ENCODE measurements at regions of chr14 and their contacts with region 1.

Region 1: GRCh38 chr14:64198486-64198885 is 95.7 kb downstream of the ESR2 start:
- DNase-seq: no peak
- H3K4me3 ChIP-seq: no peak overlapping the region
- H3K27ac ChIP-seq: no peak overlapping the region
- H3K4me1 ChIP-seq: peaks cover 0 to 8% (median 0%) of the 10 kb centered on the region in 4 donors
- H3K27me3 ChIP-seq: no peaks in the 10 kb centered on the region
- CTCF ChIP-seq: no peak
- EP300 ChIP-seq: no peak
- POLR2A ChIP-seq: no peak

Region 2: DNA sequence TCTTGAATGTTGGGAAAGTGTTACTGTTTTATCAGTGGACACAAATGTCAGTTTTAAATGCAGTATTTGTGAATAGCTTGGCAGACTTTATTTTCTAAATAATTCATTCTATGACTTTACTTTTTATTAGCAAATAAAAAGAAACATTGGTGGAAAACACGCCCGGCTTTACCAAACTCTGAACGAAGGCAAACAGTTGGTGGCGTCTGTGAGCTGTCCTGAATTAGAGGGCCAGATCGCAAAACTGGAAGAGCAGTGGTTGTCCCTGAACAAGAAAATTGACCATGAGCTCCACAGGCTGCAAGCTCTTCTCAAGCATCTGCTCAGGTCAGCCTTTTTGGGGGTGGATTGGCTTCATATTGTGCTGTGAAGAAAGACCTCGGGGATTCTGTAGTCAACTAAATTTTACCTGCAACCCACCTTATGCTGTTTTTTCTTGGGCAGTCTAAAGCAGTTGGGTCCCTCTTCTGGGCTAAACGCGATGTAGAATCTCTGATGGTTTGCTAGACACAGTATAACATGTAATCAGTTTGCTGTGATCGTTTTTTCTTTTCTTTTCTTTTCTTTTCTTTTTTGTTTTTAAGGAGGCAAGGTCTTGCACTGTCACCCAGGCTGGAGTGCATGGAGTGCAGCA is 60.7 kb before region 1 on chr14:
- in situ Hi-C with region 1: no loop called
- intact Hi-C with region 1: no loop called
- DNase-seq: no peak
- H3K4me3 ChIP-seq: no peak overlapping the region
- H3K27ac ChIP-seq: no peak overlapping the region
- H3K4me1 ChIP-seq: no peaks in the 10 kb centered on the region
- H3K27me3 ChIP-seq: no peaks in the 10 kb centered on the region
- CTCF ChIP-seq: no peak
- EP300 ChIP-seq: no peak
- POLR2A ChIP-seq: no peak

Region 3: GRCh38 chr14:64170181-64170580 is 28.3 kb before region 1 on chr14:
- in situ Hi-C with region 1: no loop called
- intact Hi-C with region 1: no loop called
- DNase-seq: peak; percentile 25
- H3K4me3 ChIP-seq: no peak overlapping the region
- H3K27ac ChIP-seq: no peak overlapping the region
- H3K4me1 ChIP-seq: no peaks in the 10 kb centered on the region
- H3K27me3 ChIP-seq: no peaks in the 10 kb centered on the region
- CTCF ChIP-seq: no peak
- EP300 ChIP-seq: no peak
- POLR2A ChIP-seq: no peak

Region 4: DNA sequence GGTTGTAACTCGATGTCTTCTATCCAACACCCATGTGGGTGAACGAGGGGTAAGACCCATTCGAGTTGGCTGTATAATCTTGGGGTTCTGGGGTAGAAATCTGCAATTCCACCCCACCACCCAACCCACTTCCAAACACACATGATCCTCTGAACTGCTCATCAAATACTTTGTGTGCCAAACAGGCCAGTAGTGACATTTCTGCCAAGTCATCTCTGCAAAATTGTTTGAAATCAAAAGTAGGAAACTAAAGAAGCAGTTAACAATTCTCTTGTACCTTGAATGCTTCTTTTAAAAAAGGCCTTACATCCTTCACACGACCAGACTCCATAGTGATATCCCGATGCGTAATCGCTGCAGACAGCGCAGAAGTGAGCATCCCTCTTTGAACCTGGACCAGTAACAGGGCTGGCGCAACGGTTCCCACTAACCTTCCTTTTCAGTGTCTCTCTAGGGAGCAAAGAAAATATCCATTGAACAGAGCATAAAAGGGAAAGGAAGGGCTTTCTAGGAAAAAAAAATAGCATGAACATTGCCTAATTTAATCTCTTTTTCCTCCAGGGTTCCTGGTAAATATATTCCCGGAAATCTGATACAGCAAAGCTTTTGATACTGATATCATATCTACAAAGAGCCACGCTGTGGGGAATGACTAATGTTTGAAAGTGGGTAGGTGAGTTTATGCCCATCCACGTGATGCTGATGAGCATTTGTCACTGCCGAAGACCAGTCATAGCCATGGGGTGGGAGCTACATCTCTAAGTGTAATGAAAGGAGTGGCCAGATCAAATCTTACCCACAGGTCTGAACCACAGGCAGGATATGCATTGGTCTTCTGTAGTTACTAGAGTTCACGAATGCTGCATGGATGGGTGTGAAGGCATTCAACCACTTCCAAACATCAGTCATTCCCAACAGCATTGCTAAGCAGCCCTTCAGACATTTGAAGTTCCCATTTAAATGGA is 81.5 kb after region 1 on chr14:
- in situ Hi-C with region 1: no loop called
- intact Hi-C with region 1: loop called (anchors 2 kb)
- DNase-seq: no peak
- H3K4me3 ChIP-seq: no peak overlapping the region
- H3K27ac ChIP-seq: no peak overlapping the region
- H3K4me1 ChIP-seq: no peaks in the 10 kb centered on the region
- H3K27me3 ChIP-seq: no peaks in the 10 kb centered on the region
- CTCF ChIP-seq: no peak
- EP300 ChIP-seq: no peak
- POLR2A ChIP-seq: no peak

Region 5: GRCh38 chr14:64349741-64350490 is 151.4 kb after region 1 on chr14:
- in situ Hi-C with region 1: no loop called
- intact Hi-C with region 1: no loop called
- DNase-seq: no peak
- H3K4me3 ChIP-seq: no peak overlapping the region
- H3K27ac ChIP-seq: no peak overlapping the region
- H3K4me1 ChIP-seq: no peaks in the 10 kb centered on the region
- H3K27me3 ChIP-seq: no peaks in the 10 kb centered on the region
- CTCF ChIP-seq: no peak
- EP300 ChIP-seq: no peak
- POLR2A ChIP-seq: no peak